GM13976 (cell line): ENCODE measurements at regions of chr11 and their contacts with region 1.

Region 1: GRCh38 chr11:60634126-60634525 is 65.3 kb upstream of the MS4A8 start:
- DNase-seq: peak; percentile 31
- CTCF ChIP-seq: peak; percentile 31

Region 2: DNA sequence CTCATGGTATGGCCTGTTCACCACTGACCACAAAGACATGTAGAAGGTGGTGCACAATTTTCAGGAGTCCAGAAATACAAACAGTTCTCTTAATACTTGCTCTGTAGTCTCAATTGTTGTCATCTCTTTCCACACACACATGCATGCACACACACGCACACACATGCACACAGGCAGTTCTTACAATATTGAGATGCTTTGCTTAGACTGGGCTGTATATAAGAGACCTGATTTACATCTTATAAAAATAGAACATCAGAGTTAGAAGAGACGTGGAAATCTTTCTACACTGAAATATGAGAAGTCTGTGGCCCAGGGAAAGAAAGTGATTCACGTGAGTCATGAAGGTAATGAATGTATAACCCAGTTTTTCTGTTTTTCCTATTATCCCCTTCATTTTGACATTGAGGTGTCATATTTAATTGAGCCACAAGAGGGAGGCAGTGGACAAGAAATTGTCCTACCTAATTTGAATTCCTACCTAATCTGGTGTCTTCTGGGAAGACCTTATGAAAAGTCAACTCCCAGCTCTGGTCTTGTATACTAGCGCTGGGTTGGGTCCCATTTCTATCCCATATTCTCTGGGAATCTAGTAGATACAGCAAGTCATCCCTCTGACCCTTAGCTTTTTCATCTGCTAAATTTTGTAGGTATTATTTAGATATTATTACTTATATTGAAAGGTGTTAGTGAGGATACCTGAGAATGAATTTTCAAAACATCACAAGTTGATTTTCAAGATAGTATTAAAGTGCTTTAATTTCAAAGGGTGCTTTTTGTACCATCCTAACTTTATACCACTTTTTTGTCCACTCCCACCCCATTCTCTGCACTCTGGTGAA is 368.5 kb before region 1 on chr11:
- in situ Hi-C with region 1: loop called (anchors 10 kb)
- DNase-seq: peak; percentile 29
- CTCF ChIP-seq: peak; percentile 36

Region 3: DNA sequence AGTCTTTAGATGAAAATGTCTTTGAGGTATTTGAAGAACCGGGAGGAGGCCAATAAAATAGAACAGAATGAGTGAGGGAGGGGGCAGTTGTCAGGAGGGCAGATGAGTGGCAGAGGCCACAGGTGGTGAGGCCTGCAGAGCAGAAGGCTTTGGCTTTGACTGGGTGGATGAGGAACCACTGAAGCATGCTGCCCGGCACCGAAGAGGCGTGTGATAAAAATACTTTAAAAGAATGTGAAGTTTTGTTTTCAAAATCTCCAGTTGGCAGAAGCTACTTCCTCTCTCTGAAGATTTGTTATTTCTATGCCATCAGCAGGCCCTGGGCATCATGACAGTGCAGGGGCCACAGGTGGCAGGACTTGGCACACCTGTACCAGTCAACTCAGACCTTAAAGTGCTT is 135.3 kb before region 1 on chr11:
- in situ Hi-C with region 1: loop called (anchors 10 kb)
- DNase-seq: no peak
- CTCF ChIP-seq: no peak